ENCODE measurements at regions of chr2 and their contacts with region 1.

Region 1: DNA sequence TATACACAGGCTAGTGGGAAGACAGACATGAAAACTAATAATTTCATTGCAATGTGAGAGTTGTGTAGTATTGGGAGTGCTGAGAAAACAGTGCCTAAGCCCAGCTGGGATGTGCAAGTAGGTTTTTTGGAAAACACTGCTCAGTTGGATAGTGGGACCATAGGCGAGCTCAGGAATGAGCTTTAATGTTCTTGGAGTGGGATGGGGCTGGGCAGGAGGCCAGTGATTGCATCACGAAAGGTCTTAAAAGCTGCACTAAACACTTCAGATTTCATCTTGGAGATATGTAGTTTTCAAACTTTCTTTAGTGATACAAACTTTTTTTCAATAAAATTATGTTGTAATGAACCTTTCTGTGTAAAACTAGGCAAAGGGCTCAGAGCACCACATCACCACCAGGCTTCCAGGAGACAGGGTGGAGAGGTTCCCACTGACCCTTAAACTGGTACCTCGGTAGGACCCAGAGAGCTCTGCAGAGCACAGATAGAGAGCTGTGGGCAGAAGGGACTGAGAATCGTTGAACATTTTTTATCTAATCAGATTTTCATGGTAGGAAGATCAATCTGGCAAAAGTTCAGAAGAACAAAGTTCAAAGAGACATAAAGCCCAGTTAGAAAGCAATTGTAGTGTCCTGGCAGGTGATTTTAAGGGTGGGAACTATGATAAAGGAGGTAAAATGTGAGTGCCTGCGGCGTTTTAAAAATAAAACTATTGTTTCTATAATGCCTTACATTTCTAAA is 176.2 kb downstream of the TRABD2A start:
- DNase-seq: no peak
- ATAC-seq: no peak
- H3K4me3 ChIP-seq: no peak overlapping the region
- H3K4me3 Mint-ChIP-seq: peak overlapping the region in 4 of 10 donors; percentile 7 to 56 (median 31)
- H3K27ac ChIP-seq: no peak overlapping the region
- H3K27ac Mint-ChIP-seq: peak overlapping the region in 8 of 9 donors; percentile 14 to 86 (median 69)
- H3K4me1 ChIP-seq: peaks cover 0 to 13% of the 10 kb centered on the region in 2 donors
- H3K4me1 Mint-ChIP-seq: peaks cover 4 to 72% (median 65%) of the 10 kb centered on the region in 7 donors
- H3K27me3 ChIP-seq: no peaks in the 10 kb centered on the region
- H3K27me3 Mint-ChIP-seq: no peaks in the 10 kb centered on the region

Region 2: GRCh38 chr2:84694088-84694622 is 10.5 kb before region 1 on chr2:
- CTCF ChIA-PET with region 1: no interaction called
- POLR2A ChIA-PET with region 1: interaction called, 7 read pairs
- intact Hi-C with region 1: loop called in 1 of 2 experiments (anchors 1 kb)
- DNase-seq: peak in 8 of 9 donors; percentile 11 to 86 (median 79)
- ATAC-seq: peak; percentile 88
- H3K4me3 ChIP-seq: peak overlapping the region; percentile 43
- H3K4me3 Mint-ChIP-seq: peak overlapping the region; percentile 27 to 80 (median 68)
- H3K27ac ChIP-seq: peak overlapping the region; percentile 59
- H3K27ac Mint-ChIP-seq: peak overlapping the region; percentile 82 to 93 (median 87)
- H3K4me1 ChIP-seq: peaks cover 24 to 38% of the 10 kb centered on the region in 2 donors
- H3K4me1 Mint-ChIP-seq: peaks cover 8 to 93% (median 76%) of the 10 kb centered on the region in 7 donors
- H3K27me3 ChIP-seq: no peaks in the 10 kb centered on the region
- H3K27me3 Mint-ChIP-seq: peaks cover 0 to 3% (median 0%) of the 10 kb centered on the region in 5 donors

Region 3: GRCh38 chr2:84716564-84716963 is 11.9 kb after region 1 on chr2:
- CTCF ChIA-PET with region 1: interaction called, 6 read pairs
- POLR2A ChIA-PET with region 1: interaction called, 8 read pairs
- intact Hi-C with region 1: loop called in 1 of 2 experiments (anchors 1 kb)
- DNase-seq: no peak
- ATAC-seq: peak; percentile 14
- H3K4me3 ChIP-seq: no peak overlapping the region
- H3K4me3 Mint-ChIP-seq: peak overlapping the region in 8 of 10 donors; percentile 8 to 80 (median 64)
- H3K27ac ChIP-seq: peak overlapping the region; percentile 58
- H3K27ac Mint-ChIP-seq: peak overlapping the region in 8 of 9 donors; percentile 82 to 98 (median 88)
- H3K4me1 ChIP-seq: peaks cover 0 to 19% of the 10 kb centered on the region in 2 donors
- H3K4me1 Mint-ChIP-seq: peaks cover 11 to 69% (median 55%) of the 10 kb centered on the region in 7 donors
- H3K27me3 ChIP-seq: no peaks in the 10 kb centered on the region
- H3K27me3 Mint-ChIP-seq: no peaks in the 10 kb centered on the region

Region 4: GRCh38 chr2:84723831-84724230 is 19.2 kb after region 1 on chr2:
- CTCF ChIA-PET with region 1: no interaction called
- POLR2A ChIA-PET with region 1: no interaction called
- intact Hi-C with region 1: loop called in 1 of 2 experiments (anchors 2 kb)
- DNase-seq: no peak
- ATAC-seq: no peak
- H3K4me3 ChIP-seq: no peak overlapping the region
- H3K4me3 Mint-ChIP-seq: peak overlapping the region in 8 of 10 donors; percentile 18 to 67 (median 38)
- H3K27ac ChIP-seq: no peak overlapping the region
- H3K27ac Mint-ChIP-seq: peak overlapping the region in 8 of 9 donors; percentile 43 to 91 (median 74)
- H3K4me1 ChIP-seq: peaks cover 0 to 13% of the 10 kb centered on the region in 2 donors
- H3K4me1 Mint-ChIP-seq: peaks cover 15 to 67% (median 60%) of the 10 kb centered on the region in 7 donors
- H3K27me3 ChIP-seq: no peaks in the 10 kb centered on the region
- H3K27me3 Mint-ChIP-seq: no peaks in the 10 kb centered on the region

Region 5: GRCh38 chr2:84879584-84880394 is 175.1 kb after region 1 on chr2:
- CTCF ChIA-PET with region 1: no interaction called
- POLR2A ChIA-PET with region 1: no interaction called
- intact Hi-C with region 1: no loop called
- DNase-seq: peak in 4 of 9 donors; percentile 32 to 42 (median 36)
- ATAC-seq: no peak
- H3K4me3 ChIP-seq: peak overlapping the region; percentile 80
- H3K4me3 Mint-ChIP-seq: peak overlapping the region; percentile 84 to 99 (median 96)
- H3K27ac ChIP-seq: peak overlapping the region; percentile 89
- H3K27ac Mint-ChIP-seq: peak overlapping the region; percentile 89 to 98 (median 96)
- H3K4me1 ChIP-seq: peaks cover 5 to 40% of the 10 kb centered on the region in 2 donors
- H3K4me1 Mint-ChIP-seq: peaks cover 46 to 72% (median 63%) of the 10 kb centered on the region in 7 donors
- H3K27me3 ChIP-seq: no peaks in the 10 kb centered on the region
- H3K27me3 Mint-ChIP-seq: peaks cover 0 to 3% (median 0%) of the 10 kb centered on the region in 5 donors

Region 6: DNA sequence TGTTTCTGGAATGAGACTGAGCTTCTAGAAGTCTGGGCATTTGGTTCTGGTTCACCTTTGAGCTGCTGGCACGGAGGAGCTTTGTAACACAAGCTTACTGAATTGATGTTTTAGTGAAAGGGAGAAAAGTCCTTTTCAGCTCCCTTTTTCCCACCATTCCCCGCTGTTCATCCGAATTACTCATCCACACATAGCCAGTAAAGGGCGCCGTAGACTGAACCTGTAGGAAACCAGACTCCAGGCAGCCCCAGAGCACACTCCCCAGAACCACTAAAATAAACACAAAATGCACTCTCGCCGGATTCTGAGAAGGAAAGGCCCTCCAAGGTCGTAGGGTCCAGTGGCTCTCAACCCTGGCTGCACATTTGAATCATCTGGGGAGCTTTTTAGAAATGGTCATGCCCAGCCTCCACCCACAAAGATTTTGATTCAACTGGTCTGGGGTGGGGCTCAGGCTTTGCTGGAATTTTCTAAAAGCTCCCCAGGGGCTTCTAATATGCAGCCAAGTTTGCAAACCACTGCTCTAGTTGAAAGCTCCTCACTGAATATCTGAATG is 458.1 kb after region 1 on chr2:
- CTCF ChIA-PET with region 1: no interaction called
- POLR2A ChIA-PET with region 1: no interaction called
- intact Hi-C with region 1: no loop called
- DNase-seq: no peak
- ATAC-seq: no peak
- H3K4me3 ChIP-seq: no peak overlapping the region
- H3K4me3 Mint-ChIP-seq: no peak overlapping the region
- H3K27ac ChIP-seq: no peak overlapping the region
- H3K27ac Mint-ChIP-seq: no peak overlapping the region
- H3K4me1 ChIP-seq: no peaks in the 10 kb centered on the region
- H3K4me1 Mint-ChIP-seq: no peaks in the 10 kb centered on the region
- H3K27me3 ChIP-seq: no peaks in the 10 kb centered on the region
- H3K27me3 Mint-ChIP-seq: peaks cover 0 to 9% (median 0%) of the 10 kb centered on the region in 5 donors